PC-9 (cell line): ENCODE measurements at regions of chr2 and their contacts with region 1.

Region 1: GRCh38 chr2:201231781-201232466 is 28.4 kb upstream of the CASP8 start:
- DNase-seq: peak; percentile 92
- H3K4me3 ChIP-seq: peak overlapping the region; percentile 23; the same call in 1 of the 2 replicates
- H3K27ac ChIP-seq: peak overlapping the region; percentile 38
- H3K4me1 ChIP-seq: peaks cover 54% of the 10 kb centered on the region
- H3K27me3 ChIP-seq: no peaks in the 10 kb centered on the region
- CTCF ChIP-seq: peak; percentile 93

Region 2: GRCh38 chr2:200901459-200902072 is 330.4 kb before region 1 on chr2:
- CTCF ChIA-PET with region 1: interaction called, 13 read pairs
- POLR2A ChIA-PET with region 1: interaction called, 4 read pairs
- intact Hi-C with region 1: loop called (anchors 1 kb)
- DNase-seq: peak; percentile 68 to 75
- H3K4me3 ChIP-seq: no peak overlapping the region
- H3K27ac ChIP-seq: no peak overlapping the region
- H3K4me1 ChIP-seq: no peaks in the 10 kb centered on the region
- H3K27me3 ChIP-seq: no peaks in the 10 kb centered on the region
- CTCF ChIP-seq: peak; percentile 81

Region 3: DNA sequence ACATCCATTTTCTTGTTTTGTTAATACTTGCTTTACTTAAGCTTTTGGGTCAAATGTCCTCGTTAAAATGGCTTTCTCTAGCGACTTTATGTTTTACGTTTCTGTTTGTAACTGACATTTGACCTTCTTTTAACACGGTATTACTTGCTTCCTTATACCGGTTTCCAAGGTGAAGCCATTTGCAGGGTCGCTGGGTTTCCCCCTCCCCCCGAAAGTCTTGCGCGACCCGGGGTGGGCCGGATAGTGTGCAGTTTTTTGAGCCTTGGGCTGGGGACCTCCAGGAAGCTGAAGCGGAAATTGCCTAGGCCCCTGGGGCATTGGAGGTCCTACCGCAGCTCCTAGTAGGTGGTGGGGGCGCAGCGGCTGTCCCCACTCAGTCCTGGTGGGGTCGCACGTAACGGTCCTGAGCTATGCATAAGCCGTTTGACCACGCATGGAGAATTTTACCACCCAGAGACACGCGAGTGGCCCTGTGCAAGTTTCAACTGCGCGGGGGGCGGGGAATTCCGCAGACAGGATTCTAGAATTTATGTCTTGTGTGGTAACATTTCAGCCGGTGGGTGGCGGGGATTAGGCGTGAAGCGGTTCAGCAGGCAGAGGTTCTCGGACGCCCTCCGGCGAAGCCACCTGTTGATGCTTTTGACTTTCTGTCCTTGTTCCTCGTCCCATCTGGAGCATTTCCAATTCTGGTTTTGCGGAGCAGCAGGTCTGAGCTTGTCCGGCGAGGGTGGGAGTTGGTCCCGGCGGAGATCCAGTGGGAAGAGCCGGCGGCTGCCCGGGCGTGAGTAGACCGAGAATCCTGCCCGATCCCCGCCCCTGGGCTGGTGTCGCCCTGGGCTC is 113.6 kb before region 1 on chr2:
- CTCF ChIA-PET with region 1: interaction called, 3 read pairs
- POLR2A ChIA-PET with region 1: interaction called, 3 read pairs
- intact Hi-C with region 1: loop called (anchors 2 kb)
- DNase-seq: peak; percentile 77 to 87
- H3K4me3 ChIP-seq: peak overlapping the region; percentile 68
- H3K27ac ChIP-seq: peak overlapping the region; percentile 100
- H3K4me1 ChIP-seq: peaks cover 59% of the 10 kb centered on the region
- H3K27me3 ChIP-seq: no peaks in the 10 kb centered on the region
- CTCF ChIP-seq: peak; percentile 56; the same call in 1 of the 2 replicates

Region 4: DNA sequence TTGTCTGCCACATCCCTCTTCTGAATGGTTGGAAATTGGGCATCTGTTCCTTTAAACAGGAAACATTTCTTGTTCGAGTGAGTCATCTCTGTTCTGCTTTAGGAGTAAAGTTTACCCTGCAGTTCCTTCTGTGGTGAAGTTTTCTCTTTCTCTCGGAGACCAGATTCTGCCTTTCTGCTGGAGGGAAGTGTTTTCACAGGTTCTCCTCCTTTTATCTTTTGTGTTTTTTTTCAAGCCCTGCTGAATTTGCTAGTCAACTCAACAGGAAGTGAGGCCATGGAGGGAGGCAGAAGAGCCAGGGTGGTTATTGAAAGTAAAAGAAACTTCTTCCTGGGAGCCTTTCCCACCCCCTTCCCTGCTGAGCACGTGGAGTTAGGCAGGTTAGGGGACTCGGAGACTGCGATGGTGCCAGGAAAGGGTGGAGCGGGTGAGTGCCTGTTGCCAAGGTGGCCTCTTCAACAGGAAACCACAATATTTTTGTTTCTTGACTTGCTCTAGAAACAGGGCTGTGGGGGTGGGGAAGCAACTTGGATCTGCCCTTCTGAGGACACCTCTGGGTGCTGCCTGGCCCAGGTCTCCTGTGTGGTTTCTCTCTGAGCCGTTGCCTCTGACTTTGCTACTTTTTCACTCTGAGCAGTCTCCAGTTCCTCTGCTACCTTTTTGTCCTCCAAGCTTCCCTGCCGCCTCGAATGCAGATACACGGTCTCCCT is 26.2 kb after region 1 on chr2:
- CTCF ChIA-PET with region 1: no interaction called
- POLR2A ChIA-PET with region 1: interaction called, 4 read pairs
- intact Hi-C with region 1: loop called (anchors 1 kb)
- DNase-seq: peak; percentile 86 to 91
- H3K4me3 ChIP-seq: peak overlapping the region; percentile 59
- H3K27ac ChIP-seq: peak overlapping the region; percentile 94
- H3K4me1 ChIP-seq: peaks cover 38% of the 10 kb centered on the region
- H3K27me3 ChIP-seq: no peaks in the 10 kb centered on the region
- CTCF ChIP-seq: no peak

Region 5: GRCh38 chr2:201642579-201643215 is 410.8 kb after region 1 on chr2:
- CTCF ChIA-PET with region 1: no interaction called
- POLR2A ChIA-PET with region 1: no interaction called
- intact Hi-C with region 1: loop called (anchors 10 kb)
- DNase-seq: peak; percentile 46 to 87
- H3K4me3 ChIP-seq: peak overlapping the region; percentile 80
- H3K27ac ChIP-seq: peak overlapping the region; percentile 73
- H3K4me1 ChIP-seq: peaks cover 11% of the 10 kb centered on the region; the same call in 1 of the 2 replicates
- H3K27me3 ChIP-seq: no peaks in the 10 kb centered on the region
- CTCF ChIP-seq: no peak

Region 6: DNA sequence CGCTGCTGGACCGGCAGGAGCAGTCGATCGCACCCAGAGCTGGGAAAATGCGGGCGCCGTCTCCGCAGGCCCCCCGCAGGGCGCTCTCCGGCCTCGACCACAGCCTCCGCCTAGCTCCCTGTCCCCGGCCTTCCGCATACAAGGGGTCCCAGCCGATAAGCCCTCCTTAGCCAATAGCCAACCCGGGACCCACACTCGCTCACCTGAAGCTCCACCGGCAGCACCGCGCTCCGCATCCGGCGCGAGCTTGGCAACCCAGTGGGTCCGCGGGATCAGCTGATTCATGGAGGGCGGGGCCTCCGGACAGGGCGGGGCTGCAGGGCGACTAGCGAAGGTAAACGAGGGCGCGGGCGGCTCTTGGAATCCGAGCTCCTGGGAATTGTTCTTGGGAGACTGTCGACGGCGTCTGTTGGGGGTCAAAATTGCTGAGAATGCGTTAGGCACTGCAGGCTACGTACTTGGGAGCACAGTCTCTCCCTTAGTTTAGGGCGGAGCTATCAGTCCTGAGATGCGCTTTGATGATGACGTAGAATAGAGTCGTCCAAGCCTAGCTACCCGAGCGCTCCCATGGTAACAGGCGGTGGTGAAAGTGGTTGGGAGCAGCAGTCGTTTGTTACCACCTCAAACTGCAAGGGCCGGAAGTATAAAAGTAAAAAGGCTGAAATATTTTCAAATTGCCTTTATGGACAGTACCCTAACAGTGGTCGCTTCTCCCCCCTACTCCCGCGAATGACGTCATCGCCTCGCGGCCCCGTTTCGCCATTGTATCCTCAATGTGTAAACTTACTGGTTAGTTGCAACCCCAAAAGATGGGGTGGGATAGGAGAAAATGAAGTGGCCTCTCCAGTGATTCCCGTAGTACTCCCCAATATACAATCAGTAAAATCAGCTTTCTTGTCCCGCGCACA is 549.0 kb after region 1 on chr2 and contains the start of gene ALS2:
- CTCF ChIA-PET with region 1: no interaction called
- POLR2A ChIA-PET with region 1: interaction called, 4 read pairs
- intact Hi-C with region 1: loop called (anchors 2 kb)
- DNase-seq: peak; percentile 97
- H3K4me3 ChIP-seq: peak within 1 kb of the TSS; percentile 80
- H3K27ac ChIP-seq: peak within 1 kb of the TSS; percentile 51
- H3K4me1 ChIP-seq: peaks cover 28% of the 10 kb centered on the region
- H3K27me3 ChIP-seq: no peaks in the 10 kb centered on the region
- CTCF ChIP-seq: no peak
- total RNA-seq, gene ALS2: 27.2 and 27.6 TPM in 2 replicates